ENCODE measurements at regions of chr1 and their contacts with region 1.

Region 1: GRCh38 chr1:228082135-228082891 is at the start of gene ARF1:
- DNase-seq: peak; percentile 84 to 94
- H3K4me3 ChIP-seq: peak within 1 kb of the TSS; percentile 91 to 99 (median 95)
- H3K27ac ChIP-seq: peak within 1 kb of the TSS; percentile 95
- H3K4me1 ChIP-seq: peaks cover 7 to 30% (median 8%) of the 10 kb centered on the region in 4 experiments
- H3K27me3 ChIP-seq: peaks cover 0 to 14% (median 12%) of the 10 kb centered on the region in 4 experiments; a peak in 5 of 7 replicates
- CTCF ChIP-seq: no peak
- EP300 ChIP-seq: no peak
- POLR2A ChIP-seq: peak in 1 of 2 experiments; percentile 91; a peak in 2 of 3 replicates
- RAD21 ChIP-seq: no peak
- total RNA-seq, gene ARF1: 265 and 267 TPM in 2 replicates

Region 2: DNA sequence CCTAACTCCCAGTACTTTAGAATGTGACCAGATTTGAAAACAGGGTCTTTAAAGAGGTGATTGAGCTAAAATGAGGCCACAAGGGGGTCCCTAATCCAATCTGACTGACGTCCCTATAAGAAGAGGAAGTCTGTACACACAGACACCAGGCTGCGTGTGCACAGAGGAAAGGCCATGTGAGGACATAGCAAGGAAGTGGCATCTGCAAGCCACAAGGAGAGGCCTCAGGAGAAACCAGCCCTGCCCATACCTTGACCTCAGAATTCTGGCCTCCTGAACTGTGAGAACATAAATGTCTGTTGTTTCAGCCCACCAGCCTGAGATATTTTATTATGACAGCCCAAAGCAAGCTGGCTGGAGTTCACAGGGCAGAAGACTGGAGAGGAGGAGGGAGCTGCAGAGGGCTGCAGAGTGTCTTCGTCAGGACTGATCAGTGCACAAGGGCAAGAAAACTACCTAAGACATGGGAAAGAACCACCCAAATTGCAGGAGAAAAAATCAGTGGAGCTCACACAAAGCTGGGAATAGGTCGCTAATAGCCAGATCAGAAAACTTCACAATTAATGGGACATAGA is 120.6 kb before region 1 on chr1:
- CTCF ChIA-PET with region 1: no interaction called
- POLR2A ChIA-PET with region 1: no interaction called
- DNase-seq: no peak
- H3K4me3 ChIP-seq: no peak overlapping the region
- H3K27ac ChIP-seq: no peak overlapping the region
- H3K4me1 ChIP-seq: peaks cover 0 to 3% (median 0%) of the 10 kb centered on the region in 4 experiments; a peak in 1 of 7 replicates
- H3K27me3 ChIP-seq: no peaks in the 10 kb centered on the region
- CTCF ChIP-seq: no peak
- EP300 ChIP-seq: no peak
- POLR2A ChIP-seq: no peak
- RAD21 ChIP-seq: no peak

Region 3: DNA sequence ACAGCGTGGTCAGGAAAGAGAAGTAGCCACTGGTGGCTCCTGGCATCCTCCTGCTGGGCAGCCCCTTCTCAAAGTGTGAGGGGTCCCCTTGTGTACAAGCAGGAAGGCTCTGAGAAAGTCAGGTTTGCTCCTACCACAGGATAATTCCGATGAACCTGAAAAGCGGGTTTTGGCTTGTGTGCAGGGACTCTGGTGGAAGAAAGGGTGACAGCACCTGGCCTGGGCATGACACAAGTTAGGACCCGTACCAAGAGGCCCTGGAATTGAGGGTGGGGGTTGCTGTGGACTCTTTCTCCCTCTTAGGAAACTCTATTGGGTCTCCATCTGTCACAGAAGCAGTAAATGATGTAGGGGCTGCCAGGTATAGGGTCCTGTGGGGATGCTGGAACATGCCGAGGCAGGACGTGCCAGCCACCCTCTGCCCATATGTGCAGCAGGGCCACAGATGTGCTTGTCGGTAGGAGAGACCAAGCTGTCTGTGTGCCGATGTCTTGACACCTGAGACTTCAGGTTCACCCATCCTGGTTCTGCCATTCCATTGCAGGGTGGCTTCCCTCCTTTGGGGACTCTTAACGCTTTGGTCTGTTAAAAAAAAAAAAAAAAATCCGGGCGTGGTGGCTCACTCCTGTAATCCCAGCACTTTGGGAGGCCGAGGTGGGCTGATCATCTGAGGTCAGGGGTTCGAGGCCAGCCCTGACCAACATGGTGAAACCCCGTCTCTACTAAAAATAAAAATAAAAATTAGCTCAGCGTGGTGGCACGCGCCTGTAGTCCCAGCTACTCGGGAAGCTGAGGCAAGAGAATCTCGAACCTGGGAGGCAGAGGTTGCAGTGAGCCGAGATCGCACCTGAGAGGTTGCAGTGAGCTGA is 11.0 kb after region 1 on chr1:
- CTCF ChIA-PET with region 1: interaction called, 8 read pairs
- POLR2A ChIA-PET with region 1: interaction called, 53 read pairs
- DNase-seq: no peak
- H3K4me3 ChIP-seq: no peak overlapping the region
- H3K27ac ChIP-seq: no peak overlapping the region
- H3K4me1 ChIP-seq: peaks cover 0 to 3% (median 0%) of the 10 kb centered on the region in 4 experiments; a peak in 3 of 7 replicates
- H3K27me3 ChIP-seq: no peaks in the 10 kb centered on the region
- CTCF ChIP-seq: no peak
- EP300 ChIP-seq: no peak
- POLR2A ChIP-seq: no peak
- RAD21 ChIP-seq: no peak

Region 4: GRCh38 chr1:228101994-228102790 is 19.9 kb after region 1 on chr1:
- CTCF ChIA-PET with region 1: interaction called, 8 read pairs
- POLR2A ChIA-PET with region 1: interaction called, 53 read pairs
- DNase-seq: peak in 1 of 2 experiments; percentile 66
- H3K4me3 ChIP-seq: peak overlapping the region; percentile 63 to 92 (median 77)
- H3K27ac ChIP-seq: no peak overlapping the region
- H3K4me1 ChIP-seq: peaks cover 0 to 2% (median 0%) of the 10 kb centered on the region in 4 experiments; a peak in 1 of 7 replicates
- H3K27me3 ChIP-seq: no peaks in the 10 kb centered on the region; a peak in 1 of 7 replicates
- CTCF ChIP-seq: peak in 2 of 3 experiments; percentile 29 to 39; a peak in 2 of 4 replicates
- EP300 ChIP-seq: no peak
- POLR2A ChIP-seq: no peak
- RAD21 ChIP-seq: peak in 1 of 2 experiments; percentile 12; a peak in 1 of 4 replicates

Measured in H1 (cell line).